ENCODE measurements at regions of chr3 and their contacts with region 1.

Region 1: GRCh38 chr3:172106989-172107388 is 67.6 kb downstream of the FNDC3B start:
- DNase-seq: peak; percentile 73
- ATAC-seq: peak; percentile 57
- H3K4me3 Mint-ChIP-seq: peak overlapping the region; percentile 54
- H3K27ac Mint-ChIP-seq: peak overlapping the region; percentile 82
- H3K4me1 Mint-ChIP-seq: peaks cover 73% of the 10 kb centered on the region
- H3K27me3 Mint-ChIP-seq: no peaks in the 10 kb centered on the region

Region 2: GRCh38 chr3:171257251-171258203 is 849.5 kb before region 1 on chr3:
- CTCF ChIA-PET with region 1: no interaction called
- POLR2A ChIA-PET with region 1: no interaction called
- intact Hi-C with region 1: loop called in 1 of 2 experiments (anchors 10 kb)
- DNase-seq: no peak
- ATAC-seq: peak; percentile 28
- H3K4me3 Mint-ChIP-seq: no peak overlapping the region
- H3K27ac Mint-ChIP-seq: peak overlapping the region; percentile 84
- H3K4me1 Mint-ChIP-seq: peaks cover 93% of the 10 kb centered on the region
- H3K27me3 Mint-ChIP-seq: no peaks in the 10 kb centered on the region

Region 3: DNA sequence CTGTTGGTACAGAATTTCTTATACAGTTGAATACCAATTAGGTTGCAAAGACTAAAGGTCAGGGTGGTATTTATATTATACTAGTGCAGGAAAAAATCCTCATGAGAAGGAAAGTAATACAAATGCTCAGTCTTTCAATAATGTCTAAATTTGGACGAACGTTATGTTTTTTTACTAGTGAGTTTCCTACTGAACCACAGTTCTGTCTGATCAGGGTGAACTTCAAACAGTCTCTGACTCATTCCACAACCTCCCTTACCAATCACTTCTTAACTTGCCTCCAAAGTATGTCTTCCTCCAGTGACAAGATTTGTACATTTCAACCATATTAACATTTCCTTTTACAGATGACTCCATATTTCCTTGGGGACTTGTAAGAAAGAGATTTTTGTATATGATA is 260.4 kb before region 1 on chr3:
- CTCF ChIA-PET with region 1: no interaction called
- POLR2A ChIA-PET with region 1: no interaction called
- intact Hi-C with region 1: loop called in 1 of 2 experiments (anchors 2 kb)
- DNase-seq: no peak
- ATAC-seq: peak; percentile 98
- H3K4me3 Mint-ChIP-seq: no peak overlapping the region
- H3K27ac Mint-ChIP-seq: no peak overlapping the region
- H3K4me1 Mint-ChIP-seq: peaks cover 21% of the 10 kb centered on the region
- H3K27me3 Mint-ChIP-seq: peaks cover 8% of the 10 kb centered on the region

Region 4: DNA sequence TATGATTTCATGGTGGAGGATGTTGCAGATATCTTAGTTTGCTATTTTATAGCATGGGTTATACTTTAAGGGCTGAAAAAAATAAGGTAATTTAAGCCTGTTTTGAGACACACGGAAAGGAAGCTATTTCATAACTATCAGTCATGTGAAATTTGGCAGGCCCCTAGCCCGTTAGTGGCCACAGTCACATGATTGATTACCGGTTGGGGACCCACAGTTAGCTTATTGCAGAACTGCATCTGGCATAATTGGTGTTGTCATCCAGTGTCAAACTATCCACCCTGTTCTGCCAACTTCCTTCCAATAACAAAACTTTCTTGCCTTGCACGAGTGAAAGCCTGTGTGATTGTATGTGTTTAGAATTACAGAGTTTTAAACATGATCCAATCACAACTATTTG is 32.4 kb before region 1 on chr3:
- CTCF ChIA-PET with region 1: no interaction called
- POLR2A ChIA-PET with region 1: no interaction called
- intact Hi-C with region 1: no loop called
- DNase-seq: no peak
- ATAC-seq: no peak
- H3K4me3 Mint-ChIP-seq: no peak overlapping the region
- H3K27ac Mint-ChIP-seq: no peak overlapping the region
- H3K4me1 Mint-ChIP-seq: no peaks in the 10 kb centered on the region
- H3K27me3 Mint-ChIP-seq: no peaks in the 10 kb centered on the region

Region 5: GRCh38 chr3:172084871-172085556 is 22.0 kb before region 1 on chr3:
- CTCF ChIA-PET with region 1: interaction called, 8 read pairs
- POLR2A ChIA-PET with region 1: interaction called, 4 read pairs
- intact Hi-C with region 1: loop called in 1 of 2 experiments (anchors 1 kb)
- DNase-seq: no peak
- ATAC-seq: peak; percentile 80
- H3K4me3 Mint-ChIP-seq: no peak overlapping the region
- H3K27ac Mint-ChIP-seq: peak overlapping the region; percentile 11
- H3K4me1 Mint-ChIP-seq: peaks cover 27% of the 10 kb centered on the region
- H3K27me3 Mint-ChIP-seq: no peaks in the 10 kb centered on the region

Region 6: DNA sequence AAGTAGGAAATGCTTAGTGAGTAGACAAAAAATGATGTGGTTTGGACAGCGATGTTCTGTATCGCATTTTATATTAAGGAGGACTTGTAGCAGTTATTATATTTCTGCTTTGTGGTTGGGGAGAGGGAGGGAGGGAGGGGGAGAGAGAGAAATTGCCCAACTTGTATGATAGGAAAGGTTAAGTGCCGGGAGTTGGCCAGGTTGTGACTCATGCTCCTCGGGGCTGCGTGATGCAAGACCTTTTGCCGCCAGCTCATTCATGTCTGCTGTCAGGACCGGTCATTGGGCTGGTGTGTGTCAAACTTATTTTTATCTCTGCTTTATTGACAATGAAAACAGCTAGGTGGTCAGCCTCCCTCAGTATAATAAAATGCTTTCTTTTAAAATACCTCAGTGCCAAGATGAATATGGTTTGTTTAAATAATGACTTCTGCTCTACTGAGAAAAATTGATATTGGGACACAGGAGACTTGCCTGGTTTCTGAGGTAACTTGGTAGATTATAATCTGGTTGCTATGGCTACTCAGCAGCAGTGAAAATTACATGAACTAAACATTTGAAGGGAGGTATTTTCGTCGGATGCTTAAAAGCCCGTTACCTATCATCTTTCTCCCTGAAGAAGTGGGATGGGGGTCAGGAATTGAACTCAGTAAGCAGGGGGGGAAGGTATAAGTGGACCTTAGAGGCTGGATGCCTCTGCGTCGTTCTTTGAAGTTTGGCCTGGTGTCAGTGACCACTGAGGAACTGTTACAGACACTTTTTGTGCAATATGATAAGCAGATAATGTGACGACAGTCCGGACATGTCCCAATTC is 23.1 kb after region 1 on chr3:
- CTCF ChIA-PET with region 1: interaction called, 3 read pairs
- POLR2A ChIA-PET with region 1: no interaction called
- intact Hi-C with region 1: loop called in 1 of 2 experiments (anchors 1 kb)
- DNase-seq: peak; percentile 72
- ATAC-seq: peak; percentile 75
- H3K4me3 Mint-ChIP-seq: no peak overlapping the region
- H3K27ac Mint-ChIP-seq: peak overlapping the region; percentile 56
- H3K4me1 Mint-ChIP-seq: peaks cover 43% of the 10 kb centered on the region
- H3K27me3 Mint-ChIP-seq: no peaks in the 10 kb centered on the region

Region 7: GRCh38 chr3:172522871-172523818 is 416.2 kb after region 1 on chr3 and contains the start of gene TNFSF10:
- CTCF ChIA-PET with region 1: no interaction called
- POLR2A ChIA-PET with region 1: no interaction called
- intact Hi-C with region 1: loop called in 1 of 2 experiments (anchors 5 kb)
- DNase-seq: peak; percentile 81
- ATAC-seq: peak; percentile 80
- H3K4me3 Mint-ChIP-seq: peak within 1 kb of the TSS; percentile 91
- H3K27ac Mint-ChIP-seq: peak within 1 kb of the TSS; percentile 95
- H3K4me1 Mint-ChIP-seq: peaks cover 50% of the 10 kb centered on the region
- H3K27me3 Mint-ChIP-seq: no peaks in the 10 kb centered on the region
- total RNA-seq, gene TNFSF10: 33.1 to 34.8 TPM